Posterior cingulate gyrus (tissue), 11 donors: ENCODE measurements at regions of chr20 and their contacts with region 1.

Region 1: GRCh38 chr20:11544029-11544678 is 373.5 kb upstream of the BTBD3 start:
- DNase-seq: peak in 1 of 10 donors; percentile 14

Region 2: DNA sequence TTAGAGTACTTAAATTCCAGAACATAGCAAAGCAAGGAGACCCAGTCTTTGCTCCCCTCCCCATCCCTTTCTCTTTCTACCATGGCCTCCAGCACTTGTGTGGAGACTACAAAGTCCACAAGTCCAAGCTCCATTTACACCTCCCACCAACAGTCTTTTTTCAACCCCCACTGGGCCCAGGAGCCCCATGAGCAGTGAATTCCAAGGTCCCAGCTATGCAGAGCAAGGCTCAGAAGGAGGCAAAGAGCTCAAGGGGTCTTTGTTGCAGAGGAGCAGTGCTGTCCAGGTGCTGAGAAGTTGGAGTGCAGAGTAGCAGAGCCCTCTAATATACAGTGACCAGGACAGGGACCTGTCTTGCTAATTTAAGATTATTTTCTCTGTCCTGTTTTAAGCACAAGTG is 1714.3 kb before region 1 on chr20:
- intact Hi-C with region 1: no loop called
- DNase-seq: no peak

Region 3: DNA sequence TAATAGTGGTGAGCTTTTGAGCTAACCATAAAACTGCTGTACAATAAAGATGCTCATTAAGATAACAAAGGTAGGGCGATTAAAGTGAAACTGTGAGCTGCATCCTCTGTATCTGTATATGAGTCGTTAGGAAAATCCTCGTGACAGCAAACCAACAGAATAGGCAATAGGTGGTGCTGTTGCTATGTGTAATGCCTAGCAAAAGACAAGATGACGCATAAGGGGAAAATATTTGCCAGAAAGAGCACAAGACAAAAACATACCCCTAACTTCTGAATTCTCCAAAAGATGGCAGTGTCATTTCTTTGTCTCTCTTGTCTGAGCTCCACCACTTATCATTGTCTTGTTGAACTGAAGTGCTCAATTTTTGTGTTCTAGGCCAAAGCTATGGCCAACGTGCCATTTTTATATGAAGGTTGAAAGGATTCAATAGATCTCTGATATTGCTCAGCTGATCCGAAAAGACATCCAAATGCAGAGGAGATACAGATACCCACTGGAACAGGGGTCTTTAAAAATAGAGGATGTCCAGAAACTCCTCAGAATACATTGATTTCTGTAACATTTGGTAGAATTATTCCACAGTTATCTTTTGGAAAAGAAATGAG is 1565.7 kb before region 1 on chr20:
- intact Hi-C with region 1: loop called (anchors 2 kb)
- DNase-seq: peak in 3 of 10 donors; percentile 18 to 24 (median 18)

Region 4: GRCh38 chr20:10469599-10469998 is 1074.6 kb before region 1 on chr20:
- intact Hi-C with region 1: loop called (anchors 5 kb)
- DNase-seq: peak in 1 of 10 donors; percentile 20

Region 5: GRCh38 chr20:10553326-10553984 is 990.7 kb before region 1 on chr20:
- intact Hi-C with region 1: loop called (anchors 5 kb)
- DNase-seq: peak in 7 of 10 donors; percentile 51 to 89 (median 56)

Region 6: GRCh38 chr20:10673988-10674711 is 870.0 kb before region 1 on chr20 and contains the start of gene JAG1:
- intact Hi-C with region 1: loop called (anchors 10 kb)
- DNase-seq: peak; percentile 84 to 99 (median 93)

Region 7: DNA sequence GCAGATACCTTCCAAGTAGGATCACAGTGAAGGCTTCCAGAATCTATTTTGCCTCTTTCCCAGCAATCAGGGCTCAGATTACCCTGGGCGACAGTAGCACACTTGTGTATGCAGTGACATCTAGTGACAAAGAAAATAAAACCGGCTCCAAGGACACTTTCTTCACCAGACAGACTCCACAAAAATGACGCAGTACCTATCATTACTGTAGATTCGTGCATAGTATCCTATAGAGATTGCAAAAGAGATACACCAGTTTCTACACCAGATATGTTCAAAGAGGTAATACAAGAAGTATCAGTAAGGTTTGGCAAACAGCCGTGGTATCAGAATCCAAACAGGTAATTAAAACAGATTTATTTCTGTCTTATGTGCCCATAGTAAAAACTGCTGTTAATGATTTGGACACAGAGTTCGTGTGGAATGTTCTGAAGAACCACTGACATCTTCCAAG is 270.0 kb before region 1 on chr20:
- intact Hi-C with region 1: loop called (anchors 10 kb)
- DNase-seq: peak in 5 of 10 donors; percentile 33 to 81 (median 36)